ENCODE measurements at regions of chr6 and their contacts with region 1.

Region 1: GRCh38 chr6:24933868-24934401 is 1.8 kb downstream of the RIPOR2 start:
- DNase-seq: peak in 10 of 14 experiments; percentile 30 to 82 (median 50)
- ATAC-seq: peak; percentile 21
- H3K4me3 ChIP-seq: peak overlapping the region; percentile 89
- H3K4me3 Mint-ChIP-seq: peak overlapping the region; percentile 97
- H3K27ac ChIP-seq: peak overlapping the region; percentile 71 to 89
- H3K27ac Mint-ChIP-seq: peak overlapping the region; percentile 97
- H3K4me1 ChIP-seq: peaks cover 38% of the 10 kb centered on the region
- H3K4me1 Mint-ChIP-seq: peaks cover 62% of the 10 kb centered on the region
- H3K27me3 ChIP-seq: no peaks in the 10 kb centered on the region
- H3K27me3 Mint-ChIP-seq: no peaks in the 10 kb centered on the region
- CTCF ChIP-seq: peak; percentile 97

Region 2: DNA sequence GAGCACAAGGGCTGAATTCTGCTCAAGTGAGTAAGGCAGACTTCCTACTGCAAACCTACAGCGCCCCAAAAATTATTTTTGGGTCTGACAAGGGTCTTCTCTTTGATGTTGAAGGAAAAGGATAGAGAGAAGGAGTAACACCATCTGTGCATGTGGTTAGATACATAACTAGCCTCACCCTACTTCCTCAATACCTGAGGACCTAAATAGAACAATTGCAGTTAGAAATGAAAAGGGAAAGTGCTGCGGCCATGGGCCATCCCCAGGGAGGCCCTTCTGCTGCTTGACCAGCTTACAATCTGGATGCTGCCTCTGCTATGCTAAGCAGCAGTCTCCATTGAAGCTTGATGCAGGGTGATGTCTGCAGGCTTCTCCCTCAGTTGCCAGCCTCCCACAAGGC is 72.0 kb before region 1 on chr6:
- CTCF ChIA-PET with region 1: interaction called, 47 read pairs
- POLR2A ChIA-PET with region 1: interaction called, 74 read pairs
- intact Hi-C with region 1: loop called (anchors 2 kb)
- DNase-seq: no peak
- ATAC-seq: no peak
- H3K4me3 ChIP-seq: no peak overlapping the region
- H3K4me3 Mint-ChIP-seq: no peak overlapping the region
- H3K27ac ChIP-seq: peak overlapping the region; percentile 39 to 78
- H3K27ac Mint-ChIP-seq: peak overlapping the region; percentile 93
- H3K4me1 ChIP-seq: peaks cover 77% of the 10 kb centered on the region
- H3K4me1 Mint-ChIP-seq: peaks cover 98% of the 10 kb centered on the region
- H3K27me3 ChIP-seq: no peaks in the 10 kb centered on the region
- H3K27me3 Mint-ChIP-seq: no peaks in the 10 kb centered on the region
- CTCF ChIP-seq: no peak

Region 3: GRCh38 chr6:24910961-24911712 is 22.8 kb before region 1 on chr6:
- CTCF ChIA-PET with region 1: interaction called, 65 read pairs
- POLR2A ChIA-PET with region 1: interaction called, 172 read pairs
- intact Hi-C with region 1: loop called in 1 of 2 experiments (anchors 2 kb)
- DNase-seq: peak in 13 of 14 experiments; percentile 27 to 79 (median 58)
- ATAC-seq: peak; percentile 46
- H3K4me3 ChIP-seq: peak overlapping the region; percentile 65
- H3K4me3 Mint-ChIP-seq: peak overlapping the region; percentile 95
- H3K27ac ChIP-seq: peak overlapping the region; percentile 73 to 88
- H3K27ac Mint-ChIP-seq: peak overlapping the region; percentile 97
- H3K4me1 ChIP-seq: peaks cover 93% of the 10 kb centered on the region
- H3K4me1 Mint-ChIP-seq: peaks cover 99% of the 10 kb centered on the region
- H3K27me3 ChIP-seq: no peaks in the 10 kb centered on the region
- H3K27me3 Mint-ChIP-seq: no peaks in the 10 kb centered on the region
- CTCF ChIP-seq: no peak

Region 4: DNA sequence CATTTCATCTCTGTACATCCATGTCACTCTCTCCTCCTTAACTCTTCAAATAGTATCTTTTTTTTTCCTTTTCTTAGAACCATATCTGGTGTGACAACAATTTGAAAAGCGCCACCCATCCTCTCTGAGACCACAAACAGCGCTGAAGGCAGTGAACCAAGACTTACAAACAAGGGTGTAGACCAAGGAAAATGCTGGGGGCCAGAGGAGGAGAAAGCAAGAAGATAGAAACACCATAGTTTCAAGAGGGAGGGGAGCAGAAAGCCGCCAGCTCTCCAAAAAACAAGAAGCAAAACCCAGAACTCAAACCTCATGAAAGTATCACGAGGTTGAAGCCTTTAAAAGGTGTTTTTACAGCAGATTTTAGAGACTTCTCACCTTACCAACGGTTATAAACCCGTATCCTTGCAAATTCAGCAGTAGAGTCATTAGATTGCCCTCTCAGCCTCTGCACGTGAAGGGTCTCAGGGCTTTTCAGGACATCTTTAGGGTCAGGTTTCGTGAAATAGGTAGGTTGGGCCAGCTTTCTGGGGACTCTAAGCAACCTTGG is 15.2 kb after region 1 on chr6:
- CTCF ChIA-PET with region 1: interaction called, 98 read pairs
- POLR2A ChIA-PET with region 1: interaction called, 1,043 read pairs
- intact Hi-C with region 1: loop called (anchors 1 to 2 kb)
- DNase-seq: peak in 12 of 14 experiments; percentile 38 to 89 (median 58)
- ATAC-seq: peak; percentile 45
- H3K4me3 ChIP-seq: peak overlapping the region; percentile 5
- H3K4me3 Mint-ChIP-seq: peak overlapping the region; percentile 50
- H3K27ac ChIP-seq: peak overlapping the region; percentile 56 to 70
- H3K27ac Mint-ChIP-seq: peak overlapping the region; percentile 91
- H3K4me1 ChIP-seq: peaks cover 62% of the 10 kb centered on the region
- H3K4me1 Mint-ChIP-seq: peaks cover 87% of the 10 kb centered on the region
- H3K27me3 ChIP-seq: no peaks in the 10 kb centered on the region
- H3K27me3 Mint-ChIP-seq: no peaks in the 10 kb centered on the region
- CTCF ChIP-seq: no peak

Region 5: GRCh38 chr6:25006565-25007001 is 72.6 kb after region 1 on chr6:
- CTCF ChIA-PET with region 1: interaction called, 5 read pairs
- POLR2A ChIA-PET with region 1: interaction called, 11 read pairs
- intact Hi-C with region 1: no loop called
- DNase-seq: peak in 6 of 14 experiments; percentile 24 to 89 (median 54)
- ATAC-seq: peak; percentile 66
- H3K4me3 ChIP-seq: peak overlapping the region; percentile 3
- H3K4me3 Mint-ChIP-seq: peak overlapping the region; percentile 69
- H3K27ac ChIP-seq: peak overlapping the region; percentile 73 to 89
- H3K27ac Mint-ChIP-seq: peak overlapping the region; percentile 74
- H3K4me1 ChIP-seq: peaks cover 49% of the 10 kb centered on the region
- H3K4me1 Mint-ChIP-seq: peaks cover 80% of the 10 kb centered on the region
- H3K27me3 ChIP-seq: no peaks in the 10 kb centered on the region
- H3K27me3 Mint-ChIP-seq: no peaks in the 10 kb centered on the region
- CTCF ChIP-seq: no peak

Region 6: DNA sequence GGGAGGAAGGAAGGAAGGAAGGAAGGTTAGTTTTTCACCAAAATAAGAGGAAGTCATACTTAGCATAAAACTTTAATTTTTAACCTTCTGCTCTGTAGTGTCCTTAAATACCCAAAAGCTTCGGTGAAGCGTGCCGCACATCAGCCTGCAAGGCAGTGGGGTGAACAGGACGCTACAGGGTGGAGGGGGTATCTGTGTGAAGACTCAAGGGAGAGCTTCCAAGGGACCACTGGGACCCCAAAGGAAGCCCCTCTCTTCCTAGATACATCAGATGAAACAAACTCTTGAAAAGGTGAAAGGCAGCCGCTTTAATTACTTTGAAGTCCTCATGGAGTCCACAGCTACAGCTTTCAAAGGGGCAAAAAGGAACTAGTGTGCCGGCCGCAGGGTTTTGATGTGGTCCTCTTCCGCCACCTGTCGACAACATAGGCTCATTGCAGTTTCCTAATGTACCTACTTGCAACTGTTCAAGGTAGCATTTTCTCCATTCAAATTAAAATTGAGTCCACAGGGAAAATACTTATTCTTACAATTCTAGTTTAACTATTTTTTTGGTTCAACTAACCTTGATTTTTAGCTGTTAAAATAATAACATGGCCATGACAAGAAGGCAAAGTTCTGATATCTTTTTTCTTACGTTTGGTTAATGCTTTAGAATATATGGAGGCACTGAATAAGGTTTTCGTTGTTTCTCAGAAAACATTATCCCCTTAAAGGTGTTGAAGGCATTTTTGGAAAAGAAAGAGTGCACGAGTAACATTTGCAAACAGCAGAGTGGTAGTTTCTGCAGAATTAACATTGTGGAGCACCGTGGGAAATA is 136.8 kb after region 1 on chr6:
- CTCF ChIA-PET with region 1: interaction called, 4 read pairs
- POLR2A ChIA-PET with region 1: interaction called, 6 read pairs
- intact Hi-C with region 1: loop called in 1 of 2 experiments (anchors 5 kb)
- DNase-seq: peak; percentile 71 to 93 (median 76)
- ATAC-seq: peak; percentile 99
- H3K4me3 ChIP-seq: no peak overlapping the region
- H3K4me3 Mint-ChIP-seq: peak overlapping the region; percentile 14
- H3K27ac ChIP-seq: no peak overlapping the region
- H3K27ac Mint-ChIP-seq: peak overlapping the region; percentile 75
- H3K4me1 ChIP-seq: peaks cover 4% of the 10 kb centered on the region
- H3K4me1 Mint-ChIP-seq: peaks cover 10% of the 10 kb centered on the region
- H3K27me3 ChIP-seq: no peaks in the 10 kb centered on the region
- H3K27me3 Mint-ChIP-seq: no peaks in the 10 kb centered on the region
- CTCF ChIP-seq: peak; percentile 98